ENCODE measurements at regions of chr2 and their contacts with region 1.

Region 1: GRCh38 chr2:160205511-160205910 is 5.4 kb upstream of the ITGB6 start:
- DNase-seq: peak; percentile 97
- H3K4me3 ChIP-seq: no peak overlapping the region
- H3K27ac ChIP-seq: peak overlapping the region; percentile 91
- H3K4me1 ChIP-seq: peaks cover 48% of the 10 kb centered on the region
- H3K27me3 ChIP-seq: no peaks in the 10 kb centered on the region
- CTCF ChIP-seq: no peak
- POLR2A ChIP-seq: peak; percentile 72

Region 2: GRCh38 chr2:160157861-160158829 is 47.4 kb before region 1 on chr2:
- CTCF ChIA-PET with region 1: interaction called, 10 read pairs
- POLR2A ChIA-PET with region 1: no interaction called
- dilution Hi-C with region 1: no loop called
- intact Hi-C with region 1: loop called (anchors 1 kb)
- DNase-seq: no peak
- H3K4me3 ChIP-seq: no peak overlapping the region
- H3K27ac ChIP-seq: no peak overlapping the region
- H3K4me1 ChIP-seq: peaks cover 18% of the 10 kb centered on the region
- H3K27me3 ChIP-seq: no peaks in the 10 kb centered on the region
- CTCF ChIP-seq: no peak
- POLR2A ChIP-seq: no peak

Region 3: DNA sequence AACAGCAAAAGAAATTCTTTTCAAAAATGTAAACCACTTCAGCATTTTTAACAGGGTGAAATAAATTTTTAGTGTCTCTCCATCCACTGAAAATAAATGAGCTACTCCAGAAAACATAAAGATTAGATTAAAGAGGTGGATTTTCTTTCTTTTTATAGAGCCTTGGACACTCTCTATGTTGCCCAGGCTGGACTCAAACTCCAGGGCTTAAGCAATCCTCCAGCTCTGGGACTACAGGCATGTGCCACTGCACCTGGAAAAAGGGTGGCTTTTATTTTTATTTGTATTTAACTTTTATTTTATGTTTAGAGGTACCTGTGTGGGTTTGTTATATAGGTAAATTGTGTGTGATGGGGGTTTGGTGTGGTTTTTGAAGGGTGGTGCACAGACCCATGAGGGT is 25.3 kb before region 1 on chr2:
- CTCF ChIA-PET with region 1: interaction called, 5 read pairs
- POLR2A ChIA-PET with region 1: no interaction called
- dilution Hi-C with region 1: no loop called
- intact Hi-C with region 1: loop called (anchors 2 kb)
- DNase-seq: no peak
- H3K4me3 ChIP-seq: no peak overlapping the region
- H3K27ac ChIP-seq: no peak overlapping the region
- H3K4me1 ChIP-seq: peaks cover 6% of the 10 kb centered on the region
- H3K27me3 ChIP-seq: no peaks in the 10 kb centered on the region
- CTCF ChIP-seq: no peak
- POLR2A ChIP-seq: no peak

Region 4: DNA sequence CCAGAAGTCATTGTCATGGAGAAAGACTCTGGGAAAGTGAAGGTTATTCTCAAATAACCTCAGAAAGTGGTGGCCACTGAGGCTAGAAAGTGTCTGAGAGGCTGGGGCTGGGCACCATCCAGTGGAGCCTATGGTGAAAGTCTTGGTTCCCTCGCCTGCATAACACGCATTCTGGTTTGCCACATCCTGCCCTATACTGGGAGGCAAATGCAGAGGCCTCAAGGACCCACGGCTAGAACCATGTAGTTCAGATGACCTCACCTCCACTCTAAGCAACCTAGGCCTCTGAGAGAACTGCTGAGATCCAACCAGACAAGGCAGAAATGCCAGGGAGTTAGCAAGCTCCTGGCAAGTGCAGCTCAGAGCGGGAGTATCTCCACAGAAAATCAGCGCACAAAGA is 10.6 kb before region 1 on chr2:
- CTCF ChIA-PET with region 1: interaction called, 12 read pairs
- POLR2A ChIA-PET with region 1: no interaction called
- dilution Hi-C with region 1: no loop called
- intact Hi-C with region 1: no loop called
- DNase-seq: no peak
- H3K4me3 ChIP-seq: no peak overlapping the region
- H3K27ac ChIP-seq: no peak overlapping the region
- H3K4me1 ChIP-seq: no peaks in the 10 kb centered on the region
- H3K27me3 ChIP-seq: no peaks in the 10 kb centered on the region
- CTCF ChIP-seq: no peak
- POLR2A ChIP-seq: no peak

Measured in endothelial cell of umbilical vein (primary cell).